ENCODE measurements at regions of chr7 and their contacts with region 1.

Region 1: GRCh38 chr7:105759670-105760550 is 116.5 kb downstream of the ATXN7L1 start:
- DNase-seq: peak; percentile 32
- ATAC-seq: peak; percentile 21
- H3K4me3 Mint-ChIP-seq: no peak overlapping the region
- H3K27ac Mint-ChIP-seq: no peak overlapping the region
- H3K4me1 Mint-ChIP-seq: peaks cover 29% of the 10 kb centered on the region
- H3K27me3 Mint-ChIP-seq: no peaks in the 10 kb centered on the region

Region 2: GRCh38 chr7:105652359-105652993 is 107.4 kb before region 1 on chr7:
- CTCF ChIA-PET with region 1: interaction called, 14 read pairs
- POLR2A ChIA-PET with region 1: interaction called, 3 read pairs
- DNase-seq: peak; percentile 76
- ATAC-seq: peak; percentile 87
- H3K4me3 Mint-ChIP-seq: no peak overlapping the region
- H3K27ac Mint-ChIP-seq: no peak overlapping the region
- H3K4me1 Mint-ChIP-seq: peaks cover 5% of the 10 kb centered on the region
- H3K27me3 Mint-ChIP-seq: no peaks in the 10 kb centered on the region

Region 3: DNA sequence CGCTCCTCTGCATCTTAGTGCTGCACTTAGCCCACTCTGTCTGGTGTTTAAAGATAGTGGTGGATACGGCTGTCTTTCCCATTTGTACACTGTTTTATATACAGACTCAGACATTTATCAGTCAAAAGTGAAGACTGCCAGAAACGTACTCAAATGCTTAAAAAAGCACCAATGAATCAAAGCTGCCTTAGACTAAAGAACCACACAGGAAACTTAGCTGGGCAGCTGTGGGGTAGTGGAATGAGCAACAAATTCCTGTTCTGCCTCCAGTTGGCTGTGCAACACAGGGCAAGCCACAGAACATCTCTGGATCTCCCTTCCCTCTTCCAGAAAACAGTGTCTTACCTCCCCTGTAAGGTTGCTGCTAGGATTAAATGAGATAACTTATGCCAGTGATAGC is 40.5 kb after region 1 on chr7:
- CTCF ChIA-PET with region 1: interaction called, 23 read pairs
- POLR2A ChIA-PET with region 1: interaction called, 3 read pairs
- DNase-seq: peak; percentile 38
- ATAC-seq: peak; percentile 64
- H3K4me3 Mint-ChIP-seq: no peak overlapping the region
- H3K27ac Mint-ChIP-seq: no peak overlapping the region
- H3K4me1 Mint-ChIP-seq: peaks cover 14% of the 10 kb centered on the region
- H3K27me3 Mint-ChIP-seq: no peaks in the 10 kb centered on the region

Region 4: DNA sequence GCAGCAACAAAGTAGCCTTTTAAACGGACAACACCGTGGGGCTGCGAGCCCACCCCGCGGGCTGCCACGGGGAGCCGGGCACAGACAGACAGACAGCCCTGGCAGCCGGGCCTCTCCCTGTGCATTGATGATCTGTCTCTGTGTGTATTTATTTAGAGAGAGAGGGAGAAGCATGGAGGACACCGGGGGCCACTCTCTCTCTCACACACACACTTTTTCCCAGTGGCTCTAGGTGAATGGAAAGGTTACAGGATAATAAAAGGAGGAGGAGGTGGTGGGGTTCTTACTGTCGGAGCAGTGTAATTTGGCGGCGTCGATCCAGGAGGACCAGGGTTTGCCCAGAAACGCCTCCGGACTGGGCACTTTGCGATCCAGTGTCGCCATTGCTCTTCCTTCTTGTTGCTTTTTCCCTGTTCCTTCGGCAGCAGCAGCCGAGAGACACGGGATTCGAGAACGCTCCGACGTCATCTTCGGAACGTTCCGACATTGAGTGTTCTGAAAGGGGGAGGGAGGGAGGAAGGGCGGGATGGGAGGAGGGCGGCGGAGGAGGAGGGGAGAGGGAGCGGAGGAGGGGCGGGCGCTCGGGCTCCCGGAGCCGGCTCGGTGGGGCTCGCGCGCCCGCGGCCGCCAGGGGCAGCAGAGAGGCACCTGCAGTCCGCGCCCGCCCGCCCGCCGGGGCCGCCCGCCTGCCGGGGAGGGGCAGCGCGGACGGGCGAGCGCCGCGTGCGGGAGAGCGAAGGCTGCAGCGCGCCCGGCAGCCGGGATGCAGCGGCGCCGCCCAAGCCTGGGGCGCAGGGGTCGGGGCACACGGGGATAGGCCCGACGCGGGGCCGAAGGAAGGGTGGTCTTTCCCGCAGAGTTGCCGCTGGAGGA is 116.4 kb after region 1 on chr7 and contains the start of gene ATXN7L1:
- CTCF ChIA-PET with region 1: interaction called, 13 read pairs
- POLR2A ChIA-PET with region 1: no interaction called
- DNase-seq: peak; percentile 90
- ATAC-seq: peak; percentile 97
- H3K4me3 Mint-ChIP-seq: peak within 1 kb of the TSS; percentile 89
- H3K27ac Mint-ChIP-seq: peak within 1 kb of the TSS; percentile 73
- H3K4me1 Mint-ChIP-seq: peaks cover 20% of the 10 kb centered on the region
- H3K27me3 Mint-ChIP-seq: peaks cover 15% of the 10 kb centered on the region
- total RNA-seq, gene ATXN7L1: 3.5 to 5.0 TPM

Region 5: DNA sequence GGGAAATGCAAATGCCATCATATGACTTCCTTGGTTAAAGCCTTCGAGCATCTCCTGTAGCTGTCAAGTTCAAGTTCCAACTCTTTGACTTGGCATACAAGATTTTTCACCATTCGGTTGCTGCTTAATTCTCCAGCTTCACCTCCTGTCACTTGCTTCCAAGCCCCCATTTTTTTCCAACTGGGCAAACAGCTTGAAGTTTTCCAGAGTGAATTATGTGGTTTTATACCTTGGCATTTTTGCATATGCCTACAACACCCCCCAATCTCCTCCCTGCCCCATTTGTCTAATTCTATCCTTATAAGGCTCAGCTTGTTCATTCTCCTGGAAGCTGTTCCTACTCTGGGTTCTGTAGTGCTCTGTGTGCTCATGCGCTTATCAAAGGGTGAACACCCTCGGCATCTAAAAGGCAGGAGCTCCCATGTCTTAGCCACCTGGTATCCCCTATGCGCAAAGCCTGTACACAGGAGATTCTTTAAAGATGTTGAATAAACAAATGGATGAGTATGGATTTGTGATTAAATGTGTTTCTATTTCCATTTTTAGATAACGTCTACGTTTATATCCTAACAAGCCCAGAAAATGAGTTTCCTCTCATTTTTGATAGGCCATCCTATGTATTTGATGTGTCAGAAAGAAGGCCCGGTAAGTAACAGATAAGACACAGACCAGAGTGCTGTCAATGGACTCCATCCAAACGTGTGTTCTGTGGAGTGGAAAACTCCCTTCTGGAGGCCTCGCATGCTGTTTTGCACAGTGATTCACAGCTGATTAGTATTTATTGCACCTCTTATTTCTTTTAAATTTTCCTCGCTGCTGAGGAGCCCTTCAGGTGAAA is 255.7 kb after region 1 on chr7:
- CTCF ChIA-PET with region 1: interaction called, 12 read pairs
- POLR2A ChIA-PET with region 1: no interaction called
- DNase-seq: no peak
- ATAC-seq: no peak
- H3K4me3 Mint-ChIP-seq: no peak overlapping the region
- H3K27ac Mint-ChIP-seq: no peak overlapping the region
- H3K4me1 Mint-ChIP-seq: peaks cover 20% of the 10 kb centered on the region
- H3K27me3 Mint-ChIP-seq: peaks cover 29% of the 10 kb centered on the region

Region 6: DNA sequence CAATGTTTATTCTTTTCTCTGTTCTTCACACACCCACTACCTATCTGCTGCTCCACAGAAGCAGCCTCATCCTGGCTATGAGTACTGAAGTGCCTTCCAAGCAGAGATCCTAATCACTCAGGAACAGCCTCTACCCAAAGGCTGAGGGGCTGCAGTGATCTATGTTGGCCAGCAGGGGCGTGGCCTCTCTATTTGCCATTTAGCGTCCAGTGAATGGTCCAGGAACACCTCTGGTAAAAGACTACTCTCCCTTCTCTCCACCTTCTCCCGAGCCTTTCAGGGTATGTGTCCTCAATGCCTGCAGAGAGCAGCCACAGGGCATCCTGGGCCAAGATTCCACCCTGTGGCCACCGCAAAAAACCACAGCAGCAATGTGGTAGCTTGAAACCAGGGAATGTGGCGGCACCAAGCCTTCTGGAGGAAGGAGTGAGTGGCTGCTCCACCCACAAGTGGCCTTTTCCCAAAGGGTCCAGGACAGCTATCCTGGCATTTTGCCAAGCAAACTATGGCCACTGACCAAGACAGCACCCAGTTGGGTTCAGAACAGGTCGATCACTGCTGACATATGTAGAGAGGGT is 281.3 kb after region 1 on chr7:
- CTCF ChIA-PET with region 1: interaction called, 53 read pairs
- POLR2A ChIA-PET with region 1: interaction called, 4 read pairs
- DNase-seq: peak; percentile 45
- ATAC-seq: peak; percentile 29
- H3K4me3 Mint-ChIP-seq: no peak overlapping the region
- H3K27ac Mint-ChIP-seq: no peak overlapping the region
- H3K4me1 Mint-ChIP-seq: peaks cover 12% of the 10 kb centered on the region
- H3K27me3 Mint-ChIP-seq: peaks cover 27% of the 10 kb centered on the region

Measured in activated CD8-positive, alpha-beta T cell treated with anti-CD3 and anti-CD28 coated beads, Interleukin-2, amount 10 ng/mL, durations not matched to agents 7 days and 5 days (primary cell).